IMR-90 (cell line): ENCODE measurements at regions of chr5 and their contacts with region 1.

Region 1: DNA sequence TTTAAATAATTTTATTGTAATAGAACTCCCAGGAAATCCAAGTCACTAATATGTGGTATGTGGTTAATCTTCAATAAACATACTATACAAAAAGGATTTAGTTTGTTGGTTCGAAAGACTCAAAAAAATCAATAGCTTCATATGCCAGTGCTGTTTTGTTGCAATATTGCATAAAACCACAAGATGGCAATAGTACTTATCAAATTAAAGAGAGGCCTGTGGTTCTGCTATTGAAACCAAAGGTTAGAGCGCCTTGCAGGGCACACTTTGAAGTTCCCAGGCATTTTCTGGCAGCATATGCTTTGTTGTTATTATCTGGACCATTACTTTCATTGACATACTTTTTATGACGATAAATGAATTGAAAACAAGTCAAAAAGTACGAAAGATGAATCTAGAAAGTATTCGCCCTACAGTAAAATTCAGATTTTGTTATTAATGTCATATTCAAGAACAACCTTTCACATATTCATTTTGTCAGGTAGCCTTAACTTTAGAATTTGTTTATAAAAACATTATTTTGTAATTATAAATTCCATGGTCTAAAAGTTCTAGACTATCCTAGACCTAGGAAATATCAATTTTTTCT is 316.3 kb downstream of the MCTP1 start:
- DNase-seq: peak; percentile 67
- ATAC-seq: peak; percentile 82; the same call in 1 of the 2 replicates
- H3K4me3 ChIP-seq: no peak overlapping the region
- H3K27ac ChIP-seq: no peak overlapping the region
- H3K4me1 ChIP-seq: no peaks in the 10 kb centered on the region
- H3K27me3 ChIP-seq: no peaks in the 10 kb centered on the region
- CTCF ChIP-seq: peak; percentile 70
- POLR2A ChIP-seq: no peak
- RAD21 ChIP-seq: peak; percentile 63

Region 2: GRCh38 chr5:95238560-95239325 is 270.1 kb after region 1 on chr5:
- CTCF ChIA-PET with region 1: no interaction called
- POLR2A ChIA-PET with region 1: no interaction called
- dilution Hi-C with region 1: no loop called
- in situ Hi-C with region 1: no loop called
- intact Hi-C with region 1: loop called (anchors 1 kb)
- DNase-seq: peak; percentile 1
- ATAC-seq: no peak
- H3K4me3 ChIP-seq: no peak overlapping the region
- H3K27ac ChIP-seq: no peak overlapping the region
- H3K4me1 ChIP-seq: no peaks in the 10 kb centered on the region
- H3K27me3 ChIP-seq: no peaks in the 10 kb centered on the region
- CTCF ChIP-seq: no peak
- POLR2A ChIP-seq: no peak
- RAD21 ChIP-seq: no peak

Region 3: GRCh38 chr5:95261437-95262175 is 293.0 kb after region 1 on chr5:
- CTCF ChIA-PET with region 1: interaction called, 14 read pairs
- POLR2A ChIA-PET with region 1: no interaction called
- dilution Hi-C with region 1: no loop called
- in situ Hi-C with region 1: loop called (anchors 5 kb)
- intact Hi-C with region 1: loop called (anchors 1 kb)
- DNase-seq: peak; percentile 49
- ATAC-seq: peak; percentile 71
- H3K4me3 ChIP-seq: no peak overlapping the region
- H3K27ac ChIP-seq: no peak overlapping the region
- H3K4me1 ChIP-seq: no peaks in the 10 kb centered on the region
- H3K27me3 ChIP-seq: no peaks in the 10 kb centered on the region
- CTCF ChIP-seq: peak; percentile 64
- POLR2A ChIP-seq: no peak
- RAD21 ChIP-seq: peak; percentile 50

Region 4: GRCh38 chr5:95454536-95454935 is 485.9 kb after region 1 on chr5:
- CTCF ChIA-PET with region 1: no interaction called
- POLR2A ChIA-PET with region 1: no interaction called
- dilution Hi-C with region 1: no loop called
- in situ Hi-C with region 1: no loop called
- intact Hi-C with region 1: loop called (anchors 10 kb)
- DNase-seq: no peak
- ATAC-seq: no peak
- H3K4me3 ChIP-seq: no peak overlapping the region
- H3K27ac ChIP-seq: no peak overlapping the region
- H3K4me1 ChIP-seq: no peaks in the 10 kb centered on the region
- H3K27me3 ChIP-seq: no peaks in the 10 kb centered on the region; the same call in 1 of the 2 replicates
- CTCF ChIP-seq: no peak
- POLR2A ChIP-seq: no peak
- RAD21 ChIP-seq: no peak

Region 5: GRCh38 chr5:96226941-96227552 is 1258.4 kb after region 1 on chr5:
- CTCF ChIA-PET with region 1: no interaction called
- POLR2A ChIA-PET with region 1: no interaction called
- dilution Hi-C with region 1: no loop called
- in situ Hi-C with region 1: no loop called
- intact Hi-C with region 1: no loop called
- DNase-seq: peak; percentile 97
- ATAC-seq: peak; percentile 97
- H3K4me3 ChIP-seq: no peak overlapping the region
- H3K27ac ChIP-seq: peak overlapping the region; percentile 100
- H3K4me1 ChIP-seq: peaks cover 9% of the 10 kb centered on the region
- H3K27me3 ChIP-seq: no peaks in the 10 kb centered on the region
- CTCF ChIP-seq: no peak
- POLR2A ChIP-seq: no peak
- RAD21 ChIP-seq: peak; percentile 8; the same call in 1 of the 2 replicates